Activated T-helper 2 cell treated with anti-CD3 and anti-CD28 coated beads, Interferon-gamma antibody, Interleukin-2, Interleukin-4, amounts not matched to agents 10 μg/mL and 5 μg/mL and 100 μg/mL, durations not matched to agents 14 hours and 24 hours and 36 hours (primary cell): ENCODE measurements at regions of chr7 and their contacts with region 1.

Region 1: GRCh38 chr7:47314728-47315607 is 266.9 kb downstream of the TNS3 start:
- DNase-seq: no peak
- H3K4me3 Mint-ChIP-seq: no peak overlapping the region
- H3K27ac Mint-ChIP-seq: peak overlapping the region; percentile 66
- H3K4me1 Mint-ChIP-seq: peaks cover 34% of the 10 kb centered on the region
- H3K27me3 Mint-ChIP-seq: no peaks in the 10 kb centered on the region

Region 2: GRCh38 chr7:47327698-47328391 is 12.9 kb after region 1 on chr7:
- intact Hi-C with region 1: loop called (anchors 1 kb)
- DNase-seq: no peak
- H3K4me3 Mint-ChIP-seq: no peak overlapping the region
- H3K27ac Mint-ChIP-seq: no peak overlapping the region
- H3K4me1 Mint-ChIP-seq: peaks cover 2% of the 10 kb centered on the region
- H3K27me3 Mint-ChIP-seq: no peaks in the 10 kb centered on the region

Region 3: DNA sequence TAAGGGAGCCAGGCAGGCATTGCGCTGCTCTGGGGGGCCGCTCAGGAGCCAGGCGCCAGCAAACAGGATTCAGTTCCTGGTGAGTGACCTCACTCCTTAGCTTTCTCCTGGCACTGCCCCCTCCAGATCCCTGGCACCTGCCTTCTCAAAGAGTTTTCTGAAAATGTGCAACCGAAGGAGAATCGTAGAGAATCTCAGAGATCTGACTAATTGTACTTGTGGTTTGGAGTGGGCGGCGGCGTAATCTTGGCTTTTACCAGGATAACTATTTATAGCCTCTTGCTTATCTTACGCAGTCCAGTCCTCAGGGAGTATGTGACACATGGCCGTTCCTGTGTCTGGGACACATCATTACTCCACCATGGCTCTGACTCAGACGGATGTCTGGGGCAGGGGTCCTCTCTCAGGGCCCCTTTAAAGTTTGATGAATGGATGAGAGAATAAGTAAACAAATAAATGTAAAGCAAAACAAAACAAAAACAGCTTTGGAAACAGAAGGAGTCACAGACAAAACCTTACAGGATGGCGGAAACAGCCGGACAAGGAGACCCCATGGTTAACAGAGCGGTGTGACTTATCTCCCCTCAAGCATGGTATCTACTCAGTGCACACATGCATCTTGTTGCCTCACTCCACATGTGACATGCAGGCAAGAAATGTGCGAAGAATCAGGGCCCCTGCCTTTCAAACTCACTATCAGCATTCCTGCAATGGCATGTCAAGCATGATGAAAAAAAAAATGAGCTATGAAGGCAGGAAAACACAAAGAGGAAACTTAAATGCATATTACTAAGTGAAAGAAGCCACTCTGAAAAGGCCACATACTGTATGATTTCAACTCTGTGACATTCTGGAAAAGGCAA is 167.3 kb after region 1 on chr7:
- intact Hi-C with region 1: loop called (anchors 5 kb)
- DNase-seq: no peak
- H3K4me3 Mint-ChIP-seq: peak overlapping the region; percentile 20
- H3K27ac Mint-ChIP-seq: peak overlapping the region; percentile 81
- H3K4me1 Mint-ChIP-seq: peaks cover 32% of the 10 kb centered on the region
- H3K27me3 Mint-ChIP-seq: no peaks in the 10 kb centered on the region

Region 4: GRCh38 chr7:48245751-48246472 is 930.9 kb after region 1 on chr7:
- intact Hi-C with region 1: no loop called
- DNase-seq: no peak
- H3K4me3 Mint-ChIP-seq: no peak overlapping the region
- H3K27ac Mint-ChIP-seq: no peak overlapping the region
- H3K4me1 Mint-ChIP-seq: peaks cover 3% of the 10 kb centered on the region
- H3K27me3 Mint-ChIP-seq: peaks cover 28% of the 10 kb centered on the region